ENCODE measurements at regions of chr1 and their contacts with region 1.

Region 1: DNA sequence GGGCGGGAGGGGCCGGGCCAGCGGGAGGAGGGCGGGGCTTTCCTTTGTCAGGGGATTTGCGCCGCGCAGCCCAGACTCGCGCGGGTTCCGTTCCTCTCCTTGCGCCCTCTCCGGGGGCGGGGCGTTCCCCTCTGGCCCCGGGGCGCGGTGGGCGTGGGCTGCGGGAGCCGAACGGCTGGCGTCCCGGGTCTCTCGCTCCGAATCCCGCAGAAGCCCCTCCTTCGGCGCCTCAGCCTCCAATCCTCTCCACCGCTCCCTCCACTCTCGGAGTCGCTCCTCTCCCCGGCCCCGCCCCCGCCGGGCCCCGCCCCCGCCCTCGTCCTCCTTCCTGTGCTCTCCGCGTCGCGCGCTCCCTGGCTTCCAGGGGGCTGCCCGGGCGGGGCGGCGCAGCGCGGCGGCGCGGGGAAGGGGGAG is 82.8 kb upstream of the BMP8A start:
- DNase-seq: peak; percentile 97
- H3K4me3 ChIP-seq: peak overlapping the region; percentile 67 to 97 (median 96)
- H3K27ac ChIP-seq: peak overlapping the region; percentile 79
- H3K4me1 ChIP-seq: peaks cover 54% of the 10 kb centered on the region
- H3K27me3 ChIP-seq: no peaks in the 10 kb centered on the region
- CTCF ChIP-seq: no peak
- POLR2A ChIP-seq: peak; percentile 4

Region 2: GRCh38 chr1:39258146-39258924 is 150.3 kb before region 1 on chr1:
- CTCF ChIA-PET with region 1: no interaction called
- POLR2A ChIA-PET with region 1: no interaction called
- dilution Hi-C with region 1: no loop called
- intact Hi-C with region 1: no loop called
- DNase-seq: peak; percentile 75
- H3K4me3 ChIP-seq: no peak overlapping the region
- H3K27ac ChIP-seq: no peak overlapping the region
- H3K4me1 ChIP-seq: no peaks in the 10 kb centered on the region
- H3K27me3 ChIP-seq: no peaks in the 10 kb centered on the region
- CTCF ChIP-seq: peak; percentile 70 to 71
- POLR2A ChIP-seq: no peak

Region 3: DNA sequence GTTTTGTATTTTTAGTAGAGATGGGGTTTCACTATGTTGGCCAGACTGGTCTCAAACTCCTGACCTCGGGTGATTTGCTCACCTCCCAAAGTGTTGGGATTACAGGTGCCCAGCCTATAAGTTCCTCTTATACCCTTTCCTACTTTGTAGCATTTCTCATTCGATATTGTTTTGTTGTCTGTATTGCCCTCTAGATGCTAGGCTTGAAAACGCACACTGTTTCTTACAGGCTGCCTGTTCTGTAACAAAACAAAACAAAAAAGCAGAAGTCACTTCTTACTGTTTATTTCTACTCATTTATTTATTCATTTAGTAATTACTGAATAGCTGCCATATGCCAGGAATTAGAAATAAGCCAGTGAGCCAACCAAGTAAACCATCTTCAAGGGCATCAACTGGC is 54.1 kb before region 1 on chr1:
- CTCF ChIA-PET with region 1: interaction called, 14 read pairs
- POLR2A ChIA-PET with region 1: no interaction called
- dilution Hi-C with region 1: no loop called
- intact Hi-C with region 1: no loop called
- DNase-seq: no peak
- H3K4me3 ChIP-seq: no peak overlapping the region
- H3K27ac ChIP-seq: no peak overlapping the region
- H3K4me1 ChIP-seq: no peaks in the 10 kb centered on the region
- H3K27me3 ChIP-seq: no peaks in the 10 kb centered on the region
- CTCF ChIP-seq: no peak
- POLR2A ChIP-seq: no peak

Region 4: DNA sequence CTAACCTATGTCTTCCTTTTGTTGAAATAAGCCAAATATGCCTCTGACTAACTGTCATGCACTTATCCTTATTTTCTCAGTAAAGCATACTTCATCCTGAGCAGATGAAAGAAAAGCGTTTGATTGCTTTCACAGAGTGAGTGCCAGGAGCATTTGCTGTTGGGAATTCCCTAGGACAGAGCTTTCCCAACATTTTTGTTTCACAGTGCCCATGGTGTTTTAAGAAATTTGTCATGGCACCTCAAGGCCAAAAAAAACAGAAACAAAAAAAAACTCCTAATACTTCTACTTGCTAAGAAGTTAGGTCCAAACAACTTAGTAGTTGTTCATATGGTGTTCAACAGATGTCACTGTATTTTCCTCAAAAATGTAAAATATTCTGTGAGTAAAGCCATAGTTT is 38.0 kb before region 1 on chr1:
- CTCF ChIA-PET with region 1: interaction called, 26 read pairs
- POLR2A ChIA-PET with region 1: interaction called, 3 read pairs
- dilution Hi-C with region 1: no loop called
- intact Hi-C with region 1: loop called (anchors 10 kb)
- DNase-seq: no peak
- H3K4me3 ChIP-seq: no peak overlapping the region
- H3K27ac ChIP-seq: no peak overlapping the region
- H3K4me1 ChIP-seq: no peaks in the 10 kb centered on the region
- H3K27me3 ChIP-seq: no peaks in the 10 kb centered on the region
- CTCF ChIP-seq: no peak
- POLR2A ChIP-seq: no peak

Region 5: DNA sequence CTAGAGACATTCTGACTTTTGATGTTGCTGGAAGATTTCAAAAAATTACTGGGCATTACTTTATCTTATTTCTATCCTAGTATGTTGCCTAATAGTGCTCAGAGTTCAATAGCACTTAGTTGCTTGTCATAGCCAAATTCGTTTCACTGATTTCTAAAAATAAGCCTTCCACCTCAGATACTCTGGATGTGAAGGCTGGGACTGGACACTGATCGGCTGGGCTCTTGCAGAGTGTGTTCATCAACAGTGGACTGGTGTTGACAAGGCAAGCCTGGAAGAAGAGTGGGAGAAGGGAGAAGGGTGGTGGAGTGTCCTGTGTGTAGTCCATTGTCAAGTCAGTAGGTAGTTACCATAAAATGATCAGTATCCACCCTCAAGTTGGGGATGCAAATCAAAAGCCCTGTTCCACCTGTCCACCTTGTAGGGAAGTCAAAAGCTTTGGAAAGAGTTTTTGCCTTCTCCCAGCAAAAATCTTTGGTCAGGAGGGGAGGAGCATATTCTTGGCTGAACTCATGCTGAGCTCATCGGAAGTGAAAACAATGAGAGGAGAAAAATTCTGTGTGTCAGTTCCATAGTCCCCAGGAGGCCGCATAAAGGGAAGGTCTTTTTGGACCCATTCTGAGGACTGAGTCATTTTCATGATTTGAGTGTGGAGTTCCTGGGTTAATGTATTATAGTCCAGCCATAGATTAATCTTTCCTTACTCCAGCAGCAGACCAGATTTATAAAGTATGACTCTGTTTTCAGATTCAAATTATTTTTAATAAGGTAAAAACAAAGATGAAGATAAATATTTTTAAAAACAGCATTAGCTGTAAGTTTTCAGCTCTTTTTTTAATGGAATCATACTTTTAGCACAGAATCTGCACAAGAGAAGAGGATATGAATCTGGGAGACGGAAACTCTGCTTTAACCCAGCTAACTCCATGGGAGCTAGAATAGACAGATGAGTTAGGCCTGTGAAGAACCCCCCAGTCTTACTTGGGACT is 16.7 kb before region 1 on chr1:
- CTCF ChIA-PET with region 1: interaction called, 273 read pairs
- POLR2A ChIA-PET with region 1: interaction called, 18 read pairs
- dilution Hi-C with region 1: no loop called
- intact Hi-C with region 1: loop called (anchors 1 kb)
- DNase-seq: peak; percentile 93
- H3K4me3 ChIP-seq: peak overlapping the region in 1 of 3 experiments; percentile 57
- H3K27ac ChIP-seq: peak overlapping the region; percentile 99
- H3K4me1 ChIP-seq: peaks cover 78% of the 10 kb centered on the region
- H3K27me3 ChIP-seq: no peaks in the 10 kb centered on the region
- CTCF ChIP-seq: no peak
- POLR2A ChIP-seq: peak; percentile 36

Region 6: GRCh38 chr1:39420493-39420892 is 11.8 kb after region 1 on chr1:
- CTCF ChIA-PET with region 1: interaction called, 15 read pairs
- POLR2A ChIA-PET with region 1: no interaction called
- dilution Hi-C with region 1: no loop called
- intact Hi-C with region 1: no loop called
- DNase-seq: no peak
- H3K4me3 ChIP-seq: no peak overlapping the region
- H3K27ac ChIP-seq: no peak overlapping the region
- H3K4me1 ChIP-seq: peaks cover 10% of the 10 kb centered on the region
- H3K27me3 ChIP-seq: no peaks in the 10 kb centered on the region
- CTCF ChIP-seq: no peak
- POLR2A ChIP-seq: no peak

Measured in endothelial cell of umbilical vein (primary cell).